HepG2 (cell line): ENCODE measurements at regions of chr7 and their contacts with region 1.

Region 1: GRCh38 chr7:137898839-137899721 is 52.3 kb upstream of the DGKI start:
- DNase-seq: peak; percentile 58
- ATAC-seq: peak; percentile 92
- H3K4me3 ChIP-seq: no peak overlapping the region
- H3K27ac ChIP-seq: peak overlapping the region; percentile 25
- H3K4me1 ChIP-seq: peaks cover 42% of the 10 kb centered on the region
- H3K27me3 ChIP-seq: no peaks in the 10 kb centered on the region
- CTCF ChIP-seq: peak; percentile 97
- EP300 ChIP-seq: no peak
- POLR2A ChIP-seq: no peak
- RAD21 ChIP-seq: peak; percentile 79

Region 2: GRCh38 chr7:137399827-137400823 is 499.0 kb before region 1 on chr7:
- CTCF ChIA-PET with region 1: no interaction called
- POLR2A ChIA-PET with region 1: no interaction called
- in situ Hi-C with region 1: no loop called
- intact Hi-C with region 1: no loop called
- DNase-seq: no peak
- ATAC-seq: no peak
- H3K4me3 ChIP-seq: no peak overlapping the region
- H3K27ac ChIP-seq: no peak overlapping the region
- H3K4me1 ChIP-seq: no peaks in the 10 kb centered on the region
- H3K27me3 ChIP-seq: 0 out of 5 replicates have a peak, but pooled peaks cover 0 to 1% of the 10 kb centered on the region in 2 experiments
- CTCF ChIP-seq: no peak
- EP300 ChIP-seq: no peak
- POLR2A ChIP-seq: no peak
- RAD21 ChIP-seq: no peak

Region 3: GRCh38 chr7:137606061-137606674 is 292.9 kb before region 1 on chr7:
- CTCF ChIA-PET with region 1: interaction called, 3 read pairs
- POLR2A ChIA-PET with region 1: no interaction called
- in situ Hi-C with region 1: no loop called
- intact Hi-C with region 1: loop called (anchors 1 kb)
- DNase-seq: peak; percentile 38
- ATAC-seq: no peak; the same call in 2 of the 3 replicates
- H3K4me3 ChIP-seq: no peak overlapping the region
- H3K27ac ChIP-seq: no peak overlapping the region
- H3K4me1 ChIP-seq: no peaks in the 10 kb centered on the region
- H3K27me3 ChIP-seq: peaks cover 1 to 8% of the 10 kb centered on the region in 2 experiments; a peak in 3 of 5 replicates
- CTCF ChIP-seq: no peak
- EP300 ChIP-seq: no peak
- POLR2A ChIP-seq: no peak
- RAD21 ChIP-seq: no peak

Region 4: DNA sequence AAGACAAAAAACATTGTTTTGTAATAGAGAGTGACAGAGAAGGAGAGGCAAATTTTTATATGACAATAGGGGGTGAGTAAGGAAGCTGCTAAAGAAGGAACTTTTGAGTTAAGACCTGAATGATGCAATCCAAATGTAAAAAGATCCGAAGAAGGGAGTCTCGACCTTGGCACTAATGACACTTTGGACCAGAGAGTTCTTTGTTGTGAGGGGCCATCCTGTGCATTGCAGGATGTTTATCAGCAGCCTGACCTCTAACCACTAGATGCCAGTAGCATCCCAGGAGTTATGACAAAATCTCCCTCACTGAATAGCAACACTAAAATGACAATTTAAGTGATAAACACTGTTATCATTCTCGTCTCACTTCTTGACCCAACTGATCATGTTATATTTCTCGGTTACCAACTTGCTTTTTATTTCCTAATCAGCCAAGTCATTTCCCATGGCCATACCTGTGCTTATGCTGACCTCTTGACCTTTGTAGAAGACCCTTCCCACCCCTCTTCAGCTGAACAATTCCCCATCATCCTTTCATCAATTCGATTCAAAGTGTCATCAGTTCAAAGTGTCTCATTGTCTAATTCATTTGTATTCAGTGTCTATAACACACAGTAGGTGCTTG is 82.3 kb before region 1 on chr7:
- CTCF ChIA-PET with region 1: no interaction called
- POLR2A ChIA-PET with region 1: no interaction called
- in situ Hi-C with region 1: no loop called
- intact Hi-C with region 1: loop called (anchors 1 kb)
- DNase-seq: peak; percentile 5
- ATAC-seq: peak; percentile 74
- H3K4me3 ChIP-seq: no peak overlapping the region
- H3K27ac ChIP-seq: no peak overlapping the region
- H3K4me1 ChIP-seq: peaks cover 13% of the 10 kb centered on the region
- H3K27me3 ChIP-seq: peaks cover 0 to 11% of the 10 kb centered on the region in 2 experiments; a peak in 1 of 5 replicates
- CTCF ChIP-seq: peak; percentile 64
- EP300 ChIP-seq: no peak
- POLR2A ChIP-seq: no peak
- RAD21 ChIP-seq: peak; percentile 15; the same call in 1 of the 2 replicates

Region 5: GRCh38 chr7:138002096-138002827 is 103.2 kb after region 1 on chr7:
- CTCF ChIA-PET with region 1: interaction called, 46 read pairs
- POLR2A ChIA-PET with region 1: interaction called, 6 read pairs
- in situ Hi-C with region 1: no loop called
- intact Hi-C with region 1: no loop called
- DNase-seq: peak; percentile 99
- ATAC-seq: peak; percentile 94
- H3K4me3 ChIP-seq: peak overlapping the region; percentile 92 to 99 (median 98); a peak in 5 of 6 replicates
- H3K27ac ChIP-seq: peak overlapping the region; percentile 79
- H3K4me1 ChIP-seq: peaks cover 35% of the 10 kb centered on the region
- H3K27me3 ChIP-seq: no peaks in the 10 kb centered on the region; a peak in 1 of 5 replicates
- CTCF ChIP-seq: peak; percentile 73
- EP300 ChIP-seq: peak in 1 of 2 experiments; percentile 39; a peak in 2 of 4 replicates
- POLR2A ChIP-seq: no peak
- RAD21 ChIP-seq: peak; percentile 56; the same call in 1 of the 2 replicates

Region 6: GRCh38 chr7:138049505-138050116 is 150.5 kb after region 1 on chr7:
- CTCF ChIA-PET with region 1: no interaction called
- POLR2A ChIA-PET with region 1: no interaction called
- in situ Hi-C with region 1: no loop called
- intact Hi-C with region 1: loop called (anchors 1 kb)
- DNase-seq: peak; percentile 83
- ATAC-seq: peak; percentile 94
- H3K4me3 ChIP-seq: peak overlapping the region in 1 of 3 experiments; percentile 15; a peak in 2 of 6 replicates
- H3K27ac ChIP-seq: peak overlapping the region; percentile 81
- H3K4me1 ChIP-seq: peaks cover 48% of the 10 kb centered on the region
- H3K27me3 ChIP-seq: no peaks in the 10 kb centered on the region
- CTCF ChIP-seq: no peak
- EP300 ChIP-seq: peak in 1 of 2 experiments; percentile 80; a peak in 3 of 4 replicates
- POLR2A ChIP-seq: no peak
- RAD21 ChIP-seq: no peak